ENCODE measurements at regions of chr6 and their contacts with region 1.

Region 1: GRCh38 chr6:138115877-138116660 is 8.8 kb upstream of the PERP start:
- DNase-seq: no peak
- H3K4me3 ChIP-seq: no peak overlapping the region
- CTCF ChIP-seq: peak; percentile 40

Region 2: GRCh38 chr6:138001750-138002349 is 114.2 kb before region 1 on chr6:
- CTCF ChIA-PET with region 1: interaction called, 120 read pairs
- POLR2A ChIA-PET with region 1: no interaction called
- DNase-seq: no peak
- H3K4me3 ChIP-seq: no peak overlapping the region
- CTCF ChIP-seq: peak; percentile 73

Region 3: DNA sequence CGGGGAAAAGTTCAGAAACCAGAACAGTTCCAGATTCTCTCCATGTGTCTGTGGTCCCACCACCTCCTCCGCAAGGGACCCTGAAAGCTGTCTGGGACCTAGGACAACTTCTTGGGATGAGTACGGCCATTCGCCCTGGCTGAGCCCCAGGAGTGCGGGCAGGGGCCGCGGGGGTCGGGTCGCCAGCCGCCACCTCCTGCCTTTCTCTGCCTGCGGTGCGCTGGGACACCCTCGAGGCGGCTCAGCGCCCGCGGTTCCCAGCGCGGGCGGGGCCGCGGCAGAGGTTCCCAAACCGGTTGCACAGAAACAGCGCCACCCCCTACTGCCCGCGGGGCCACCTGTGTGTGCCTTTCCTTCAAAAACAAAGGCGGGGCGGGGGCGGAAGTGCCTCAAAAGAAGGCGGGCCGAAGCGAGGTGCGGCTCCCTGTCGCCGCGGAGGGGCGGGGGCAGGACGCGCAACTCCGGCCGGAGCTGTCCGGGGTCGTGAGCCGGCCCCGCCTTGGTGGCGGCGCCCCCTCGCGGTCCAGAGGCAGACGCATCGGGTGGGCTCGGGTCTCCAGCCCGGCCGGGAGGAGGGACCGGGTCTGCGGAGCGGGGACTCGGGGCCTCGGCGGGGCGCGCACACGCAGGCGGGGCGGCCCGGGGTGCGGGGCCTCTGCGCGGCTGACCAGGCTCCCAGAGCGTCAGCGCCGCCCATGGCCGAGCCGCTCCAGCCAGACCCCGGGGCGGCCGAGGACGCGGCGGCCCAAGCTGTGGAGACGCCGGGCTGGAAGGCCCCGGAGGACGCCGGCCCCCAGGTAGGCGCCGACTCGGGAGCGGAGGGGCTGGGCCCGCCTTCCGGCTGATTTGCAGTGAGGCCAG is 288.0 kb after region 1 on chr6 and contains the start of gene HEBP2:
- CTCF ChIA-PET with region 1: interaction called, 17 read pairs
- POLR2A ChIA-PET with region 1: no interaction called
- DNase-seq: no peak
- H3K4me3 ChIP-seq: peak within 1 kb of the TSS; percentile 67
- CTCF ChIP-seq: peak; percentile 56

Region 4: DNA sequence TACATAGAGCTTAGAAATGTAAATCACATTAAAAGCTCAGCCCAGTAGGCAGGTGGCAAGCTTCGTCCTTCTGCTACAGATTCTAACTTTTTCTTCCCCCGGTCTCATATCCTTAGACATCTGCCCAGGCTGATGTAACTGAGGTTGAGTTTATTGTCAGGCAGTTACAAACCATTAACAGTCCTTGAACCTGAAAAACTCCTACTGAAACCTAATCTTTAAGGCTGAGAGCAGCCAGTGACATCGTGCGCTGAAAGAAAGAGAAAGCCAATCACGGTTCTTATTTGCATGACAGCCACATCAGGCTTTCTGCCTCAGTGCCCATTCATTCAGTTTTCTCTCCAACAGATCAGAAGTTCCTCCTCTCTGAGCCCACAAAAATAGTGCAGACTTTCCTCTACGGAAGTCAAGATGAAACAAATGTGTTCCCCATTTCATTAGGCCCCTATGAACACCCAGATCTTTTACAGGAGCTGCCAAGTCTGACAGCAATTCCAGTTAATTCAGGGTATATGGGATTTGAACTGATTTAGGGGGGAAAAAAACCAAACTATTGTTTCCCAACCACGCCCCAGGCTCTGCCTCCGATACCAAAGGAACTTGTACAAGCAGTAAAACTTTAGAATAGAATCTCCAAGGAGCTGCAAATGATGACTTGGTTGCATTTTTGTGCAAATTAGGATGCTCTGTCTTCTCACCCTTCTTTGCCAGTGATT is 383.4 kb after region 1 on chr6 and contains the start of gene NHSL1:
- CTCF ChIA-PET with region 1: interaction called, 11 read pairs
- POLR2A ChIA-PET with region 1: no interaction called
- DNase-seq: no peak
- H3K4me3 ChIP-seq: no peak within 1 kb of the TSS
- CTCF ChIP-seq: no peak

Region 5: DNA sequence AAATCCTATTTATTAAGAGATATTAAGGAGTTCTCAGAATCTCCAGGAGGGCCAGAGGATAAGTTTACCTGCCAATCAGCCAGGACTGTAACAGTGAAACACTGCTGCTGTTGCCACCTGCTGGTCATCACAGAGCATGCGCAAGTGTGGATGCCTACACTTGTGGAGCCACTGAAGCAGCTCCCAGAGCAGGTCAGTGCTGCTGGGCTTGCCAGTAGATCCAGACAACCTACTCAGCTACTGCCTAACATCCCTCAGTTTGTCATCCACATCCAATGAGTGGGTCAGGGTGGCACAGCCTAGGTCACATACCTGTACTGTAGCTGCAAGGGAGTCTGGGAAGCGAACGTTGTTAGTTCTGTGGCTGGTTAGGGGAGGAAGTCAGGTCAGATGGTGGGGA is 401.6 kb after region 1 on chr6:
- CTCF ChIA-PET with region 1: interaction called, 65 read pairs
- POLR2A ChIA-PET with region 1: no interaction called
- DNase-seq: no peak
- H3K4me3 ChIP-seq: no peak overlapping the region
- CTCF ChIP-seq: peak; percentile 80

Region 6: GRCh38 chr6:138765896-138766655 is 650.0 kb after region 1 on chr6:
- CTCF ChIA-PET with region 1: interaction called, 85 read pairs
- POLR2A ChIA-PET with region 1: interaction called, 4 read pairs
- DNase-seq: no peak
- H3K4me3 ChIP-seq: no peak overlapping the region
- CTCF ChIP-seq: peak; percentile 31